ENCODE measurements at regions of chr4 and their contacts with region 1.

Region 1: GRCh38 chr4:24210332-24210902 is 320.6 kb upstream of the PPARGC1A start:
- DNase-seq: peak; percentile 82 to 94 (median 92)
- ATAC-seq: peak; percentile 87 to 98 (median 95)
- H3K4me3 ChIP-seq: no peak overlapping the region
- H3K27ac ChIP-seq: peak overlapping the region; percentile 85
- H3K4me1 ChIP-seq: peaks cover 0 to 32% (median 13%) of the 10 kb centered on the region in 4 donors
- H3K27me3 ChIP-seq: no peaks in the 10 kb centered on the region
- CTCF ChIP-seq: no peak
- POLR2A ChIP-seq: peak; percentile 38

Region 2: DNA sequence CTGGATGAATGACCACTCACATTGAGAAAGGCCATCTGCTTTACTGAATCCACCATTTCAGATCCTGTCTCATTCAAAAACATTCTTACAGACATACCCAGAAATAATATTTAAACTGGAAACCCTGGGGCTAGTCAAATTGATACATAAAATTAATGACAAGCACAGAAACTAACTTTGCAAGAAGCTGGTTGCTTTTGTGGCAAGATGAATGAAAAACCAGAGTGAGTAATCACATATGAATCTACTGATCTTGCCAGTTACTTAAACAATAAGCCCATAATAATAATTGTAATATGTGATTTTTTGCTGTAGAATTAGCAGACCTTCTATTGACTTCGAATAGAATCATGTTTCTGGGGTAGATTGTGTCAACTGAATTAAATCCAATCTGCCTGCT is 555.6 kb before region 1 on chr4:
- intact Hi-C with region 1: no loop called
- DNase-seq: no peak
- ATAC-seq: no peak
- H3K4me3 ChIP-seq: no peak overlapping the region
- H3K27ac ChIP-seq: no peak overlapping the region
- H3K4me1 ChIP-seq: no peaks in the 10 kb centered on the region
- H3K27me3 ChIP-seq: no peaks in the 10 kb centered on the region
- CTCF ChIP-seq: no peak
- POLR2A ChIP-seq: no peak

Region 3: GRCh38 chr4:24076811-24077210 is 133.6 kb before region 1 on chr4:
- intact Hi-C with region 1: no loop called
- DNase-seq: no peak
- ATAC-seq: peak in 1 of 4 donors; percentile 16
- H3K4me3 ChIP-seq: no peak overlapping the region
- H3K27ac ChIP-seq: no peak overlapping the region
- H3K4me1 ChIP-seq: peaks cover 0 to 15% (median 4%) of the 10 kb centered on the region in 4 donors
- H3K27me3 ChIP-seq: no peaks in the 10 kb centered on the region
- CTCF ChIP-seq: no peak
- POLR2A ChIP-seq: no peak

Region 4: GRCh38 chr4:24274381-24274941 is 64.0 kb after region 1 on chr4:
- intact Hi-C with region 1: loop called (anchors 10 kb)
- DNase-seq: no peak
- ATAC-seq: no peak
- H3K4me3 ChIP-seq: no peak overlapping the region
- H3K27ac ChIP-seq: no peak overlapping the region
- H3K4me1 ChIP-seq: peaks cover 0 to 13% (median 5%) of the 10 kb centered on the region in 4 donors
- H3K27me3 ChIP-seq: no peaks in the 10 kb centered on the region
- CTCF ChIP-seq: no peak
- POLR2A ChIP-seq: no peak

Region 5: DNA sequence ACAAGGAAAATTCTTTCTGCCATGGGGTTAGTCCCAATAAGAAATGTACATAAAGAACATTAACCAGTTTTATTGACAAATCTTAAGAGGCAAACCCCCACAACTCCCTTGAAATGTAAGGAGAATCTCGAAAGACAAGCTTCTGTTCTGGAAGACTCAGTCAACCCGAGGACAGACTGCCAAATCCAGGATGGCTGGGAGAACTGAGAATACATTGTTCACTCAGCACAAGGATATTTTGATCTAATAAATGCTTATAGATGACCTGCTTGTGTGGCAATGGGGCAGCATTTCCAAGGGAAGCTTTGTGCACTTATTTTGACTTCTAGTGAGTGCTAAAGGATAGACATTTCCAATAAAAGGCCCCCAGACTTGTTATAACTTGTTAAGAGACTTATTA is 93.5 kb after region 1 on chr4:
- intact Hi-C with region 1: no loop called
- DNase-seq: no peak
- ATAC-seq: no peak
- H3K4me3 ChIP-seq: no peak overlapping the region
- H3K27ac ChIP-seq: no peak overlapping the region
- H3K4me1 ChIP-seq: no peaks in the 10 kb centered on the region
- H3K27me3 ChIP-seq: no peaks in the 10 kb centered on the region
- CTCF ChIP-seq: no peak
- POLR2A ChIP-seq: no peak

Measured in right lobe of liver (tissue), 6 donors.